Dendritic cell treated with granulocyte-macrophage colony-stimulating factor and Interleukin-4, amounts not matched to agents 40 ng/mL and 50 ng/mL, for 4 days (primary cell): ENCODE measurements at regions of chr10 and their contacts with region 1.

Region 1: DNA sequence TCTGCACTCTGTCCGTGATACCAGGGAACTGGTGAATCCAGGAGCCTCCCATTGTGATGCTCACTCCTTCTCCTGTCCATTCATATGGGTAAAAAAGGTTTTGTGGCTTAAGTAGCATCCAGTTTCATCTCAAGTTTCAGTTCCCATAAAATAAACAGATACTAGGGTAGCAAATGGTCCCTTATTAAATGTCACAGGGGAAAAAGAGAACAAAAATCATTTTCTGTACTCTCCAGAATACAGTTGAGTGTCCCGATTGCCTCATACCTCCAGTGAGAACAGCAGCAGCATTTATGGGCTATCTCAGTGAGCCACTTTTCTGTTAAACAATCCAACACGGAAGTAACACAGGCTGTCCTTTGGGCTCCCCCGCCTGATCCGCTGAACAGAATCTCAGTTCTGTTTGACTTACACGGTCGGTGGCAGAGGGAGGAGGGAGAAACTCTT is 179.6 kb downstream of the CELF2 start:
- H3K4me3 Mint-ChIP-seq: peak overlapping the region; percentile 30
- H3K27ac Mint-ChIP-seq: peak overlapping the region; percentile 74
- H3K4me1 Mint-ChIP-seq: peaks cover 91% of the 10 kb centered on the region
- H3K27me3 Mint-ChIP-seq: no peaks in the 10 kb centered on the region

Region 2: DNA sequence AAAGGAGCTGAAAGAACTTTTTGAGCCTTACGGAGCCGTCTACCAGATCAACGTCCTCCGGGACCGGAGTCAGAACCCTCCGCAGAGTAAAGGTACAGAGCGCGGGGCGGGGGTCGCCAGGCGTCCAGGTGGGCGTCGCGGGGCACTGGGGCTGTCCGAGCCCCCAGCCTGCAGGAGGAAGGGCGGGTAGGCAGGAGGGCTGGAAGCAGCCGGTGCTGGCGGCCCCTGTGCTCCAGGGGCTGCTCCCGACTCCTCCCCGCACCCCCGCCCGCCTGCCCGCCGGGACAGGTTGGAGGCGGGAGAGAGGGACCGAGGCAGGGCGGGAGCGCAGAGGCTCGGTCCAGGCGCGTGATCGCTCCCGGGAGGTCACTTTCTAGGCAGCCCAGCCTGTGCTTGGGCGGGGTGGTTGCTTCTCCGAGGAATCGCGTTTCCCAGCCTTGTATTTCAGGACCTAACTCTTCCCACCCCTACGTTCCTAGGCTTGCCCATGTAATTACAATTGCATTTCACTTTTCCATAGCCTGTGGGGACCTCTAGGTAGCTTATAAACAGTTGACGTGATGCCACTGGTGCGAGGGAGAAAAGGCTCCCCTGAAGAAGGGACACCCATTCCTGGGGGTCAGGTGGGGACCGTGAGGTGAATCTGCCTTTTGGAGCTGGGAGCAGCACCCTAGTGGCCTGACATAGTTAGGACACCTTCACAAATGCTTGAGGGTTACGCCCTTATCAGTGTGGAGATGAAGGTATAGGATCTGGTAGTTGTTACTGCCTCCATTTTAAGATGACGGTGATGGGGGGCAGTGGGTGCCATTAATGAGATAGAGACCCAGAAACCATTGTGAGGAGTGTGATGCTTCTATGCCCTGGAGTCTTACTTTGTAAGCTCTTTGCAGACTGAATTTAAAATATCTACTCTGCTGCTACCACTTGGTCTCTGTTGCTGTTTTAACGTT is 31.4 kb before region 1 on chr10:
- intact Hi-C with region 1: loop called (anchors 2 kb)
- H3K4me3 Mint-ChIP-seq: no peak overlapping the region
- H3K27ac Mint-ChIP-seq: no peak overlapping the region
- H3K4me1 Mint-ChIP-seq: peaks cover 48% of the 10 kb centered on the region
- H3K27me3 Mint-ChIP-seq: no peaks in the 10 kb centered on the region

Region 3: GRCh38 chr10:11170993-11171851 is 26.1 kb before region 1 on chr10:
- intact Hi-C with region 1: loop called (anchors 2 kb)
- H3K4me3 Mint-ChIP-seq: no peak overlapping the region
- H3K27ac Mint-ChIP-seq: no peak overlapping the region
- H3K4me1 Mint-ChIP-seq: peaks cover 13% of the 10 kb centered on the region
- H3K27me3 Mint-ChIP-seq: no peaks in the 10 kb centered on the region

Region 4: GRCh38 chr10:11178606-11179515 is 18.4 kb before region 1 on chr10:
- intact Hi-C with region 1: loop called (anchors 2 kb)
- H3K4me3 Mint-ChIP-seq: peak overlapping the region; percentile 45
- H3K27ac Mint-ChIP-seq: peak overlapping the region; percentile 85
- H3K4me1 Mint-ChIP-seq: peaks cover 76% of the 10 kb centered on the region
- H3K27me3 Mint-ChIP-seq: no peaks in the 10 kb centered on the region

Region 5: GRCh38 chr10:11242443-11243387 is 45.4 kb after region 1 on chr10:
- intact Hi-C with region 1: loop called (anchors 1 kb)
- H3K4me3 Mint-ChIP-seq: peak overlapping the region; percentile 40
- H3K27ac Mint-ChIP-seq: no peak overlapping the region
- H3K4me1 Mint-ChIP-seq: peaks cover 57% of the 10 kb centered on the region
- H3K27me3 Mint-ChIP-seq: no peaks in the 10 kb centered on the region

Region 6: DNA sequence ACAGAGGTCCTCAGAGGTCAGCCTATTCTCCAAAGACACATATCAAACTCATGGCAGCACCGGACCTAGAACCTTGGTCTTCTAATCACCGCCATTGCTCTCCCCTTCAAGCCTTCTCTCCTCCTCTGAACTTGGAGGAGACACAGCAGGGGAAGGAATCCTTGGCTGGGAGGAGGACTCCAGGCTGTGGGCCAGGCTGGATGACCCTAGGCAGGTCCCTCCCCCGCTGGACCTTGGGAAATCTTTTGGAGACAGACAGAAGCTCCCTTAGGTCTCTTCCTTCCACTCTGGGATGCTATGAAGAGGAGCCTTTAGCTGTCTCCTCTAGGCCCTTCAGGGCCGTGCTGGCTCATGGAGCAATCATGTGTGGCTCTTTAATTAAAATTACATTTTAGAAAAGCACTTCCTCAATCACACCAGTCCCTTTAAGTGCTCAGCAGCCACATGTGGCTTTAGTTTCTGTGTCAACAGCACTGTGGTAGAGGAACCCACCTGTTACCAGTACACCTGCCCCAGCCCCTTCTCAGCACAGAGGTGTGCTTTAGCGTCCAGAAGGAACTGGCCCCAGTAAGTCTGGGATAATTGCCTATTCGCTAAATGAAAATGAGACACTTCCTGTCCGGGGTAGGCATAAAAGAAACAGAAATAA is 58.6 kb after region 1 on chr10:
- intact Hi-C with region 1: loop called (anchors 5 kb)
- H3K4me3 Mint-ChIP-seq: no peak overlapping the region
- H3K27ac Mint-ChIP-seq: peak overlapping the region; percentile 14
- H3K4me1 Mint-ChIP-seq: peaks cover 45% of the 10 kb centered on the region
- H3K27me3 Mint-ChIP-seq: no peaks in the 10 kb centered on the region